ENCODE measurements at regions of chr15 and their contacts with region 1.

Region 1: DNA sequence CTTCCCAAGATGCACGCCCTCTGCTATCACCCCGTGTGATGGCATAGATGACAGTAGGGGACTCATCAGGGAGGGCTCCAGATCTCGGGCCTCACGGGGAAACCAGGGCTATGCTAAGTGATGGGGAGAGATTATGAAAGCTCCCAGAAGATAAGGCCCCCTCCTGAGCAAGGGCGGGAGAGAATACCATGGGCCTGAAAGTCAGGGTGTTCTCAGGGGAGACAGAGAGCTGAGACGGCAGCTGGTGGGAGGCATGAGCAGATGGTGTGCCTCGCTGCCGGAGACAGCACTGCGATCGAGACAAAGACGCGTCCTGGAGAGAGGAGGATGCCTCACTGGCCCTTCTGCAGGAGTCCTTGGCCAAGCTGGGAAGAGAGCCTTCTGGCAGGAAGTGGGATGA is 106.5 kb upstream of the ADPGK start:
- DNase-seq: no peak
- ATAC-seq: peak in 2 of 4 donors; percentile 45 to 55
- H3K4me3 ChIP-seq: no peak overlapping the region
- H3K27ac ChIP-seq: no peak overlapping the region
- H3K4me1 ChIP-seq: peaks cover 0 to 5% (median 0%) of the 10 kb centered on the region in 12 donors
- H3K27me3 ChIP-seq: peaks cover 0 to 3% (median 0%) of the 10 kb centered on the region in 9 donors
- CTCF ChIP-seq: no peak
- POLR2A ChIP-seq: no peak

Region 2: GRCh38 chr15:72840114-72840513 is 49.9 kb before region 1 on chr15:
- intact Hi-C with region 1: loop called in 1 of 10 experiments (anchors 5 kb)
- DNase-seq: no peak
- ATAC-seq: no peak
- H3K4me3 ChIP-seq: no peak overlapping the region
- H3K27ac ChIP-seq: no peak overlapping the region
- H3K4me1 ChIP-seq: peaks cover 0 to 8% (median 0%) of the 10 kb centered on the region in 12 donors
- H3K27me3 ChIP-seq: peaks cover 0 to 12% (median 0%) of the 10 kb centered on the region in 9 donors
- CTCF ChIP-seq: no peak
- POLR2A ChIP-seq: no peak

Region 3: GRCh38 chr15:72923304-72923703 is 33.3 kb after region 1 on chr15:
- intact Hi-C with region 1: no loop called
- DNase-seq: no peak
- ATAC-seq: no peak
- H3K4me3 ChIP-seq: no peak overlapping the region
- H3K27ac ChIP-seq: no peak overlapping the region
- H3K4me1 ChIP-seq: no peaks in the 10 kb centered on the region
- H3K27me3 ChIP-seq: peaks cover 0 to 11% (median 0%) of the 10 kb centered on the region in 9 donors
- CTCF ChIP-seq: no peak
- POLR2A ChIP-seq: no peak

Measured in heart left ventricle (tissue), 16 donors.